Astrocyte of the cerebellum (primary cell): ENCODE measurements at regions of chr17 and their contacts with region 1.

Region 1: DNA sequence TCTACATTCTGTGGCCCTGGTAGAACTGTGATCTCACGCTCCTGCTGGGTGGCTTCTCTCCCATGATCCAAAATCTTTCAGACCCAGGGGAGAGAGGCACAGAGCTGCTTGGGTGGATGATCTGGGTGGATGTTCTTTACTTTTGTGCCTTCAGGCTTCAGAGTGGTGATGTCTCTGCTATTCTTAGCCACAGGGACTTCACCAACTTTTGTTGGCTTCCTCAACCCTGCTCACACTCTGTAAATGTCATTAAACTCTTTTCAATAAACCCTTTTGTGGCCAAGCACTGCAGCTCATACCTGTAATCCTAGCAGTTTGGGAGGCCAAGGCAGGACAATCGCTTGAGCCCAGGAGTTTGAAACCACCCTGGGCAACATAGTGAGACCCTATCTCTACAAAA is 7.6 kb downstream of the CLEC10A start:
- DNase-seq: no peak
- H3K4me3 ChIP-seq: no peak overlapping the region
- CTCF ChIP-seq: no peak

Region 2: GRCh38 chr17:7122381-7122780 is 50.0 kb after region 1 on chr17:
- in situ Hi-C with region 1: loop called (anchors 5 kb)
- DNase-seq: no peak
- H3K4me3 ChIP-seq: no peak overlapping the region
- CTCF ChIP-seq: no peak